ENCODE measurements at regions of chr11 and their contacts with region 1.

Region 1: DNA sequence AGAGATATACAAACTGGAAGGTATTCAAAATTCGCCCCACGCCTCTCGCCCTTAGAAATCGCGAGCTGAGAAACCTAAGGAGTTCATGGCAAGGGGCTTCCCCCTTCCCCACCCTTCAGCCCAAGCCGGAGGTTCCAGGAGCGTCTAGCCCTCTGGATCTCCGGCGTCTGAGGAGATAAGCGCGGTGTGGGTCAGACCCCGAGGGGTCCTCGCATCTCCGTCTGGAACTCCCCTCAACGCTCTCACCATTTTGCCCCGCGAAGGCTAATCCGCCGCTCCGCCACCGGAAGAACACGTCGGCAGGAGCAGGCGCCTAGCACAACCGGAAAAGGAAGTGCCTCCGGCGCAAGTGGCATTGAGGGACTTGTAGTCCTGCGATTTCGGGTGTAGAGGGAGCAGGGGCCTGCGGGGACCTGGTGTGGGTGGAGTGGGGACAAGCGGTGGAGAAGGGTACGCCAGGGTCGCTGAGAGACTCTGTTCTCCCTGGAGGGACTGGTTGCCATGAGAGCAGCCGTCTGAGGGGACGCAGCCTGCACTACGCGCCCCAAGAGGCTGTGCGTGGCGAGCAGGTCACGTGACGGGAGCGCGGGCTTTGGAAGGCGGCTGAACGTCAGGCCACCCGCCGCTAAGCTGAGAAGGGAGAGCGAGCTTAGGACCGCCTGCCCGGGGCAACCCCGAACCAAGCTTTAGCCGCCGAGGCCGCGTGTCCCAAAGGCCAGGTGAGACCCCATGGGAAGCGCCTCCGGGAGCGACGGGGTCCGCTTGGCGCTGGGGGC is at the starts of genes FEN1 and TMEM258:
- DNase-seq: peak; percentile 98
- H3K4me3 ChIP-seq: peak within 1 kb of the TSS; percentile 70 to 91 (median 83)
- H3K27ac ChIP-seq: peak within 1 kb of the TSS; percentile 99
- H3K4me1 ChIP-seq: peaks cover 18% of the 10 kb centered on the region
- H3K27me3 ChIP-seq: no peaks in the 10 kb centered on the region
- CTCF ChIP-seq: peak in 1 of 2 donors; percentile 3
- POLR2A ChIP-seq: peak; percentile 90
- total RNA-seq, gene FEN1: 57.9 and 60.5 TPM in 2 replicates
- total RNA-seq, gene TMEM258: 139 and 140 TPM in 2 replicates

Region 2: GRCh38 chr11:61747192-61747966 is 45.1 kb before region 1 on chr11:
- CTCF ChIA-PET with region 1: interaction called, 38 read pairs
- POLR2A ChIA-PET with region 1: no interaction called
- dilution Hi-C with region 1: no loop called
- intact Hi-C with region 1: loop called (anchors 2 kb)
- DNase-seq: peak; percentile 52
- H3K4me3 ChIP-seq: no peak overlapping the region
- H3K27ac ChIP-seq: no peak overlapping the region
- H3K4me1 ChIP-seq: no peaks in the 10 kb centered on the region
- H3K27me3 ChIP-seq: no peaks in the 10 kb centered on the region
- CTCF ChIP-seq: peak; percentile 93 to 98
- POLR2A ChIP-seq: no peak

Region 3: DNA sequence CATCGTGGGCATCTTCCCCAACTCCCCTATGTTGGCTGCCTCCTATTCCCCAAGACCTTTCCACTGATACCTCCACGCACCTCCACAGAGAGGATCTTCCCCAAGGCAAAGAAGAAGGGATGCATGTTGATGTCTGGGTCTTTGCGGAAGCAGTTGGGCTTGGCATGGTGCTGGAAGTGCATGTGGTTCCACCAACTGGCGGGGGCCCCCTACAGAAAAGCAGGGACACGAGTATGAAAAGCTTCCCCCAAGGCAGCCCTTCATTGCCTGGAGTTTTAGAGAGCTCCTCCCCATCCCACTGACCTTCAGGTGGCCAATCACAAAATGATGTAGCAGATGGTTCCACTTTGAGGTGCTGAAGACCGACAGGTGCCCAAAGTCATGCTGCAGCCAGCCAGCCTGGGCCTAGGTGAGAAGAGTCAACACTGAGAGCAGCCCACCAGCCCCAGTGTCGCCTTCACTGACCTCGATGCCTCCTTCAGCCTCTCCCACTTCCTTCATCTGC is 18.2 kb after region 1 on chr11:
- CTCF ChIA-PET with region 1: interaction called, 56 read pairs
- POLR2A ChIA-PET with region 1: interaction called, 13 read pairs
- dilution Hi-C with region 1: no loop called
- intact Hi-C with region 1: loop called (anchors 1 kb)
- DNase-seq: no peak
- H3K4me3 ChIP-seq: no peak overlapping the region
- H3K27ac ChIP-seq: no peak overlapping the region
- H3K4me1 ChIP-seq: peaks cover 3% of the 10 kb centered on the region
- H3K27me3 ChIP-seq: no peaks in the 10 kb centered on the region
- CTCF ChIP-seq: no peak
- POLR2A ChIP-seq: no peak

Region 4: GRCh38 chr11:61834278-61835048 is 42.0 kb after region 1 on chr11:
- CTCF ChIA-PET with region 1: interaction called, 38 read pairs
- POLR2A ChIA-PET with region 1: interaction called, 4 read pairs
- dilution Hi-C with region 1: no loop called
- intact Hi-C with region 1: loop called (anchors 1 kb)
- DNase-seq: peak; percentile 88
- H3K4me3 ChIP-seq: no peak overlapping the region
- H3K27ac ChIP-seq: peak overlapping the region; percentile 98
- H3K4me1 ChIP-seq: peaks cover 60% of the 10 kb centered on the region
- H3K27me3 ChIP-seq: no peaks in the 10 kb centered on the region
- CTCF ChIP-seq: no peak
- POLR2A ChIP-seq: peak; percentile 78

Region 5: GRCh38 chr11:61891331-61892084 is 99.0 kb after region 1 on chr11 and contains the start of gene FADS3:
- CTCF ChIA-PET with region 1: interaction called, 64 read pairs
- POLR2A ChIA-PET with region 1: no interaction called
- dilution Hi-C with region 1: no loop called
- intact Hi-C with region 1: loop called (anchors 2 kb)
- DNase-seq: peak; percentile 81
- H3K4me3 ChIP-seq: peak within 1 kb of the TSS; percentile 41 to 70 (median 70)
- H3K27ac ChIP-seq: peak within 1 kb of the TSS; percentile 58
- H3K4me1 ChIP-seq: peaks cover 32% of the 10 kb centered on the region
- H3K27me3 ChIP-seq: no peaks in the 10 kb centered on the region
- CTCF ChIP-seq: no peak
- POLR2A ChIP-seq: peak; percentile 78
- total RNA-seq, gene FADS3: 204 and 216 TPM in 2 replicates

Region 6: GRCh38 chr11:62108017-62108750 is 315.7 kb after region 1 on chr11:
- CTCF ChIA-PET with region 1: interaction called, 134 read pairs
- POLR2A ChIA-PET with region 1: interaction called, 3 read pairs
- dilution Hi-C with region 1: no loop called
- intact Hi-C with region 1: loop called (anchors 1 kb)
- DNase-seq: peak; percentile 68
- H3K4me3 ChIP-seq: no peak overlapping the region
- H3K27ac ChIP-seq: no peak overlapping the region
- H3K4me1 ChIP-seq: peaks cover 9% of the 10 kb centered on the region
- H3K27me3 ChIP-seq: no peaks in the 10 kb centered on the region
- CTCF ChIP-seq: peak; percentile 56 to 66
- POLR2A ChIP-seq: no peak

Measured in endothelial cell of umbilical vein (primary cell).